ENCODE measurements at regions of chr22 and their contacts with region 1.

Region 1: DNA sequence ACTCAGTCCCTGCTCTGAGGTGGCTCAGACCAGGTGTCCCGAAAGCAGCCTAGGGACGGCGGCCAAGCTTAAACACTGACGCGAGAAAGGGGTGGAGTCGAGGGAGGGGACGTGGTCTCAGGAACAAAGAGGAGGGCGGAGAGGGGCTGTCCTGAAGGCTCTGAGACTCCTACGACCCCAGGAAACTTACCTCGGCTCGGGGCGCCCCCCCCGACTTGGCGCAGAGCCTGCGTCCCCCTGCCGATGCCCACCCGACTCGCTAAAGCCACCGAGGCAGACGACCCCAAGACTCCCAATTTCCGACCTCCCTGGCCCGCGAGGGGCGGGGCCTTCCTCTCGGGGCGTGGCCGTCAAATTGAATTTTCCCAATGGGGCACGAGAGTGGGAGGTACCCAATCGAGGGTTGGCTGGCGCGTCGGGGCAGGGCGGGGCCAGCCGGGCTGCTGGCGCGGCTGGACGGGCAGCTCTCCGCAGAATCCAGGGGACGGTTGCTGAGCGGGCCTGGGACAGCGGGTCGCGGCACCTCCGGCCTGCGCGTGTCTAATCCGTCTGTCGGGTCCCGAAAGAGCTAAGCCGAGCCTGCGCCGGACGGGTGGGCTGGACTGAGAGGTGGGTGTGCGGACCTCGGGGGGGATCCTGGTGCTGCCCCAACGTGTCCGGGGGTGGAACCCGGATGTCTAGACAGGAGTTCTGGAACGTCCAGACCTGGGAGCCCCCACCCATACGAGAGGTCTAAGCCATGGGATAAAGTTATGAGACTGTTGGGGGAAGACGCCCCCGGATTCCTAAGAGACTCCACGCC is at the start of gene SMTN:
- DNase-seq: peak; percentile 84
- H3K4me3 Mint-ChIP-seq: peak within 1 kb of the TSS; percentile 92
- H3K27ac Mint-ChIP-seq: peak within 1 kb of the TSS; percentile 29
- H3K4me1 Mint-ChIP-seq: peaks cover 40% of the 10 kb centered on the region
- H3K27me3 Mint-ChIP-seq: no peaks in the 10 kb centered on the region
- total RNA-seq, gene SMTN: 10.2 and 13.7 TPM in 2 replicates

Region 2: DNA sequence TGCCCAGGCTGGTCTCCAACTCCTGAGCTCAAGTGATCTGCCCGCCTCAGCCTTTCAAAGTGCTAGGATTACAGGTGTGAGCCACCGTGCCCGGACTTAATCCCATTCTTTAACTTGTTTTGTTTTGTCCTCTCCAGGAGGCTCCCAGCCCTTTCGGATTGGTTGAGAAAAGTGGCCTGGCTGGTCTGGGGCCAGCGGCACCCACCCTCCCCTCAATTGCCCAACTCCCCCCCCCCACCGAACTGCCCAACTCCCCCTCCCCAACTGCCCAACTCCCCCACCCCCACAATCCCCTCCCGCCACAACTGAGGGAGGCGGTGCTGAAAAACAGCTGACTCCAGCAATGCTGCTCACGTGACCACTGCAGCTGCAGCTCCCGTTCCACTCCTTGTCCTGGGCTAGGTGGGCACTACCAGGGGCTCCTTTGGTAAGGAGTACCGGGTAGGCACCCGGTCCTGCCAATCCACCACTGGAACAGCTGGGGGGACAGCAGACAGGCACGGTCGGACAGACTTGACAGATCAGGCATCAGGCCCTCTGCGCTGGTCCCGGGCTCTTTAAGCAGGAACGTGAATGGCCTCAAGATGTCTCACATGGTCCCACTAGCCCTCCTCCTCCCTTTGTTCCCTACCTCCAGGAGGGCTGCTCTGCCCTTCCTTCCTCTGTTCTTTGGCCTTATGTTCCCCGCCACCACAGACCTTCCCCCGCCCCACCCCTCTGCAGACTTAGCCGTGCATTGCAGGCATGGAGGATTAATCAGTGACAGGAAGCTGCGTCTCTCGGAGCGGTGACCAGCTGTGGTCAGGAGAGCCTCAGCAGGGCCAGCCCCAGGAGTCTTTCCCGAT is 474.4 kb before region 1 on chr22 and contains the start of gene TCN2:
- intact Hi-C with region 1: no loop called
- DNase-seq: peak; percentile 19
- H3K4me3 Mint-ChIP-seq: peak within 1 kb of the TSS; percentile 82
- H3K27ac Mint-ChIP-seq: peak within 1 kb of the TSS; percentile 47
- H3K4me1 Mint-ChIP-seq: peaks cover 65% of the 10 kb centered on the region
- H3K27me3 Mint-ChIP-seq: no peaks in the 10 kb centered on the region
- total RNA-seq, gene TCN2: 0.23 and 0.34 TPM in 2 replicates

Region 3: GRCh38 chr22:30763815-30764686 is 317.0 kb before region 1 on chr22:
- intact Hi-C with region 1: loop called (anchors 1 kb)
- DNase-seq: peak; percentile 40
- H3K4me3 Mint-ChIP-seq: no peak overlapping the region
- H3K27ac Mint-ChIP-seq: no peak overlapping the region
- H3K4me1 Mint-ChIP-seq: peaks cover 4% of the 10 kb centered on the region
- H3K27me3 Mint-ChIP-seq: peaks cover 3% of the 10 kb centered on the region

Region 4: GRCh38 chr22:30920407-30920806 is 160.6 kb before region 1 on chr22:
- intact Hi-C with region 1: loop called (anchors 1 kb)
- DNase-seq: peak; percentile 69
- H3K4me3 Mint-ChIP-seq: peak overlapping the region; percentile 64
- H3K27ac Mint-ChIP-seq: peak overlapping the region; percentile 9
- H3K4me1 Mint-ChIP-seq: peaks cover 23% of the 10 kb centered on the region
- H3K27me3 Mint-ChIP-seq: no peaks in the 10 kb centered on the region

Region 5: DNA sequence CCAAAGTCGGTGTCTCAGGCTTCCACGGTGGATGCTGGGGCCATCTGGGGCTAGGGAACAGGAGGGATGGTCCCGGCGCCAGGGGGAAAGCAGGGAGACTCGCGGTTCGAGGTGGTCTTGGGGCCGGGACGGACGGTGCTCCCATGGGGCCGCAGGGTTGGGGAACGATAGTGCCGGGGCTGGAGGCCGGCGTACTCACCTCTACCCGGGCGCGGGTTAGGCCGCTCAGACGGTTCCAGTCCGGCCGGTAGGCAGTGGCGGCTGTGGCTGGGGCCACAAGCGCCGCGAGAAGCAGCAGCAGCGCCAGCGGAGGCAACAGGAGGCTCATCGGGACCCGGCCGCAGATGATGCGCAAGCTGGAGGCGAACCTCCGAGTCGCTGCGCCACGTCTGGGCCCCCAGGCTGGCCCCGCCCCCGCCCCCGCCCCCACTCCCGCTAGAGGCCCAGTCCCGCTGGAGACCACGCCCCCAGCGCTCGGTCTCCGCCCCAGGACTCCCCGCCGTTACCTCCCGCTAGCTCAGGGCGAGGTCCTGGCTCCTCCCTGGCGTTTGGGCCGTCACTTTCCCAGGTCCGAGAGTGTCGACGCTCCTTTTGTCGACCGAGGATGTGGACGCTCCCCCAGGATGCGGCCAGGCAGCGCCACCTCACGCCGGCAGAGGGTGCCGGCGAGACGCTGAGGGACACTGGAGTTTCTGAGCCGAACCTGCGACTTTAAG is 26.3 kb after region 1 on chr22 and contains the start of gene SELENOM:
- intact Hi-C with region 1: loop called (anchors 1 kb)
- DNase-seq: peak; percentile 86
- H3K4me3 Mint-ChIP-seq: peak within 1 kb of the TSS; percentile 83
- H3K27ac Mint-ChIP-seq: peak within 1 kb of the TSS; percentile 33
- H3K4me1 Mint-ChIP-seq: peaks cover 19% of the 10 kb centered on the region
- H3K27me3 Mint-ChIP-seq: peaks cover 6% of the 10 kb centered on the region
- total RNA-seq, gene SELENOM: 6.4 and 9.8 TPM in 2 replicates

Region 6: GRCh38 chr22:31262312-31263080 is 181.4 kb after region 1 on chr22:
- intact Hi-C with region 1: no loop called
- DNase-seq: no peak
- H3K4me3 Mint-ChIP-seq: no peak overlapping the region
- H3K27ac Mint-ChIP-seq: no peak overlapping the region
- H3K4me1 Mint-ChIP-seq: no peaks in the 10 kb centered on the region
- H3K27me3 Mint-ChIP-seq: no peaks in the 10 kb centered on the region

Region 7: GRCh38 chr22:31943976-31944699 is 863.1 kb after region 1 on chr22 and contains the start of gene YWHAH:
- intact Hi-C with region 1: loop called (anchors 10 kb)
- DNase-seq: peak; percentile 87
- H3K4me3 Mint-ChIP-seq: peak within 1 kb of the TSS; percentile 90
- H3K27ac Mint-ChIP-seq: peak within 1 kb of the TSS; percentile 96
- H3K4me1 Mint-ChIP-seq: peaks cover 21% of the 10 kb centered on the region
- H3K27me3 Mint-ChIP-seq: no peaks in the 10 kb centered on the region
- total RNA-seq, gene YWHAH: 128 and 139 TPM in 2 replicates

Measured in activated T-helper 1 cell treated with anti-CD3 and anti-CD28 coated beads, Interleukin-12 subunit alpha, Interleukin-12 subunit beta, Interleukin-2, Interleukin-4 antibody, amounts not matched to agents 30 ng/mL and 10 ng/mL and 1 ng/mL, durations not matched to agents 14 hours and 24 hours and 36 hours (primary cell).